A673 (cell line): ENCODE measurements at regions of chr20 and their contacts with region 1.

Region 1: DNA sequence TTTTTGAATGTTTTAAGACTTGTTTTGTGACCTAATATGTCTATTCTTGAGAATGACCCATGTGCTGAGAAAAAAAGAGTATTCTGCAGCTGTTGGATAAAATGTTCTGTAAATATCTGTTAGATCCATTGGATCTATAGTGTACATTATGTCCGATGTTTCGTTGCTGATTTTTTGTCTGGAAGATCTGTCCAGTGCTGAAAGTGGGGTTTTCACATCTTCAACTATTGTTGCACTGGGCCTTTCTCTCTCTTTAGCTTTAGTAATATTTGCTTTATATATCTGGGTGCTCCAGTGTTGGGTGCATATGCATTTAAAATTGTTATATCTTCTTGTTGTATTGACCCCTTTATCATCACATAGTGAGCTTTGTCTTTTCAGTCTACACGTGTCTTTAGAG is 5.7 kb upstream of the SIRPB2 start:
- DNase-seq: no peak
- H3K4me3 ChIP-seq: no peak overlapping the region
- H3K27ac ChIP-seq: no peak overlapping the region
- H3K4me1 ChIP-seq: peaks cover 28% of the 10 kb centered on the region
- H3K27me3 ChIP-seq: no peaks in the 10 kb centered on the region
- CTCF ChIP-seq: no peak

Region 2: DNA sequence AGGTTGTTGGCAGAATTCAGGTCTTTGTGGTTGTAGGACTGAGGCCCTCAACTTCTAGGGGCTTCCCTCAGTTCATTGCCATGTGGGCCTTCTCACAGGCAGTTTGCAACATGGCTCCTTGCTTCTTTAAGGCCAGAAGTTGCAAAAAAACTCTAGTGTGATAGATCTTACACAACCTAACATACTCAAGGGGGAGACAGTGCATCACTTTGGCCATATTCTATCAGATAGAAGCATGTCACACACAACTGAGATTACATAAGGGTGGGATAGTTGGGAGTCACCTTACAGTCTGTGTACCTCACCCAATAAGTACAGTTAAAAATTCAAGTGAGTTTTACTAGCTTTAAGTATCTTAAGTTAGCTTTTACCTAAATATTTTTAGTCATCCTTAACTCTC is 59.0 kb after region 1 on chr20:
- CTCF ChIA-PET with region 1: no interaction called
- POLR2A ChIA-PET with region 1: no interaction called
- intact Hi-C with region 1: no loop called
- DNase-seq: no peak
- H3K4me3 ChIP-seq: no peak overlapping the region
- H3K27ac ChIP-seq: no peak overlapping the region
- H3K4me1 ChIP-seq: no peaks in the 10 kb centered on the region
- H3K27me3 ChIP-seq: peaks cover 5% of the 10 kb centered on the region
- CTCF ChIP-seq: no peak

Region 3: GRCh38 chr20:3231889-3232588 is 1735.1 kb after region 1 on chr20:
- CTCF ChIA-PET with region 1: no interaction called
- POLR2A ChIA-PET with region 1: interaction called, 10 read pairs
- intact Hi-C with region 1: no loop called
- DNase-seq: no peak
- H3K4me3 ChIP-seq: no peak overlapping the region
- H3K27ac ChIP-seq: no peak overlapping the region
- H3K4me1 ChIP-seq: no peaks in the 10 kb centered on the region
- H3K27me3 ChIP-seq: peaks cover 5% of the 10 kb centered on the region
- CTCF ChIP-seq: no peak